H1 (cell line): ENCODE measurements at regions of chr16 and their contacts with region 1.

Region 1: DNA sequence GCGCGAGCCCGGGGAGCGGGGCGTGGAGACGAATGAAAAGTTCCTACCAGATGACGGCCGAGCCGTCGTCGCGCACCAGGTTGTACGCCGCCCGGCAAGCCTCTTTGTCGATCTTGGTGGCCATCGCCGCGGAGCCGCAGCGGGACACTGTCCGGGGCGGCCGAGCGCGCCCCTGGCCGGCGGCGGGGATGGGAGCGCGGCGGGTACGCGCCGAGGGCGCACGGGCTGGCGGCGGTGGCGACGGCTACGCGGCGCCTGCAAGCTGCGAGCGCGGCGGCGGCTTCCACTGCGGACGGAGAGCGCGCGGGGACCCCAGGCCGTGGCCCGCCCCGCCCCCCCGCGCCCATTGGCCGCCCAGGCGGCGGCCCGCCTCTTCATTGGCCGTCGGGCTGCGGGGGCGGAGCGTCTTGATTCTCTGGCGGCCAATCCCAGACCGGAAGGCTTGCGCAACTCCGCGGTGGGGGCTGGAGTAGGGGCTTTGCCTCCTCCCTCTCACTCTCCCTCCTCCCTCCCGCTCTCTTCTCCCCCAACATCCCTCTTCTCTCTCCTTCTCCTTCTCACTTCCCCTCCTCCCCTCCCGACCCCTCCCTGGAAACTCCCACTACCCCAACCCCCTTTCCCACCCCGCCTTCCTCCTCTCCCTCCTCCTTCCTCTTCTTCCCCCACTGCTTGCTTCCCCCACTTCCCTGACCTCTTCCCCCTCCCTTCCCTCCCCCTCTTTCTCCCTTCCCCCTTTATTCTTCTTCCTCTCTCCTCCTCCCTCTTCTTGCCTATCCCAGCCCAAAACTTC is at the start of gene COTL1:
- DNase-seq: peak; percentile 79 to 90
- H3K4me3 ChIP-seq: peak within 1 kb of the TSS; percentile 73 to 88 (median 78)
- H3K27ac ChIP-seq: peak within 1 kb of the TSS; percentile 56; the same call in 1 of the 2 replicates
- H3K4me1 ChIP-seq: peaks cover 6 to 21% (median 13%) of the 10 kb centered on the region in 4 experiments
- H3K27me3 ChIP-seq: peaks cover 0 to 5% (median 3%) of the 10 kb centered on the region in 4 experiments; a peak in 2 of 7 replicates
- CTCF ChIP-seq: no peak
- EP300 ChIP-seq: no peak
- POLR2A ChIP-seq: no peak; a peak in 1 of 3 replicates
- RAD21 ChIP-seq: no peak
- total RNA-seq, gene COTL1: 183 TPM in 2 replicates

Region 2: DNA sequence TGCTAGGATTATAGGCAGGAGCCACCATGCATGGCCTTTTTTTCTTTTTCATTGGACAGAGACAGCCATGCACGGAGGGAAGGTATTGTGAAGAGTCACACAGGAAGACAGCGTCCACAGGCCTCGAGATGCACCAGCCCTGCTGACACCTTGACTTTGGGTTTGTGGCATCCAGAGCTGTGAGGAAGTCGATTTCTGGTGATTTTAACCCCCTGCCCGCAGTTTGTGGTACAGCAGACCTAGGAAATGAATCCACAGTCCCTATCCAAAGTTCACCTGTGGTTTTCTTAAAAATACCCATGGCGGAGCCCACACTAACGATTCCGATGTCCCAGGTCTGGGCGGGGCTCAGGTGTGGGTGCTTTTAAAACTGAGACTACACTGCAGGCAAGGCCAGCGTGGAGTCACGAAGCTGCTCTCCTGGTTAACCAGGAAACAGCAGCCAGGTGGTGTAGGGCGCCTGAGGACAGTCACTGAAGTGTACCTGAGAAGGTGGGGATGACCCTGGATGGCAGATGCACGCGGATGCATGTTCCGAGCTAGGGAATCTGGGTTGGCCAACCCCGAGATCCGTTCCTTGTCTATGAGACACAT is 99.1 kb before region 1 on chr16:
- CTCF ChIA-PET with region 1: interaction called, 49 read pairs
- POLR2A ChIA-PET with region 1: interaction called, 8 read pairs
- DNase-seq: no peak
- H3K4me3 ChIP-seq: no peak overlapping the region
- H3K27ac ChIP-seq: no peak overlapping the region
- H3K4me1 ChIP-seq: peaks cover 0 to 9% (median 3%) of the 10 kb centered on the region in 4 experiments; a peak in 5 of 7 replicates
- H3K27me3 ChIP-seq: no peaks in the 10 kb centered on the region; a peak in 1 of 7 replicates
- CTCF ChIP-seq: no peak
- EP300 ChIP-seq: no peak
- POLR2A ChIP-seq: no peak
- RAD21 ChIP-seq: no peak; a peak in 1 of 4 replicates

Region 3: GRCh38 chr16:84635699-84636098 is 17.7 kb after region 1 on chr16:
- CTCF ChIA-PET with region 1: interaction called, 20 read pairs
- POLR2A ChIA-PET with region 1: no interaction called
- DNase-seq: no peak
- H3K4me3 ChIP-seq: no peak overlapping the region
- H3K27ac ChIP-seq: no peak overlapping the region
- H3K4me1 ChIP-seq: 0 out of 7 replicates have a peak, but pooled peaks cover 0 to 2% (median 0%) of the 10 kb centered on the region in 4 experiments
- H3K27me3 ChIP-seq: no peaks in the 10 kb centered on the region
- CTCF ChIP-seq: no peak
- EP300 ChIP-seq: no peak
- POLR2A ChIP-seq: no peak
- RAD21 ChIP-seq: no peak

Region 4: GRCh38 chr16:84672276-84673202 is 54.6 kb after region 1 on chr16:
- CTCF ChIA-PET with region 1: interaction called, 12 read pairs
- POLR2A ChIA-PET with region 1: no interaction called
- DNase-seq: peak; percentile 57 to 96
- H3K4me3 ChIP-seq: no peak overlapping the region
- H3K27ac ChIP-seq: no peak overlapping the region
- H3K4me1 ChIP-seq: peaks cover 0 to 13% (median 6%) of the 10 kb centered on the region in 4 experiments; a peak in 5 of 7 replicates
- H3K27me3 ChIP-seq: no peaks in the 10 kb centered on the region
- CTCF ChIP-seq: peak; percentile 92 to 95 (median 95)
- EP300 ChIP-seq: no peak
- POLR2A ChIP-seq: no peak
- RAD21 ChIP-seq: peak; percentile 65 to 76

Region 5: DNA sequence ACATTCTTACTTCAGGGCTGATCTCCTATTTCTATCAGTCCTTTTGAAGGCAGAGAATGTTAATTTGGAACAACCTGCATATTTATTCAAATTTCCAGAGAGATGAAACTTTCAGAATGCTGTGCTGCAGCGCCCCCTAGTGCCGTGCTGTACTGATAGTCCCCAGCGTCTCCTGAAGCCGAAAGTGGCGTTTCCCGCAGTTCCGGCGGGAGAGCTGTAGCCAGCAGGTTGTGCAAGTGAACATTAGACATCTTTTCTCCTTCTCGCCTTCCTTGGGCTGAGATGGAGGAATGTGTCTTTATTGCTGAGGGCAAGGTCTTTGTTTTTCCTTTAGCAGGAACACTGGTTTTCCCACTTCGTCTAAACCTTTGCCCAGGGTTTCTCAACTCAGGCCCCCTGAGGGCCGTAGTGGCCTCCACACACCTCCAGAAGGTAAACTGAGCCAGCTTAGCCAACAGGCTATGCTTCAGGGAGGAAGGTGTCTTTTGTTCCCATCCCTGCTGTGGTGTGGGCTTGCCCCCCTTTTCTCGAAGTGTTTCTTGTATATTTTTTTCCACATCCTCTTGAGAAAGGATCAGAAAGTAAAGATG is 108.2 kb after region 1 on chr16:
- CTCF ChIA-PET with region 1: interaction called, 30 read pairs
- POLR2A ChIA-PET with region 1: interaction called, 3 read pairs
- DNase-seq: peak; percentile 36 to 93
- H3K4me3 ChIP-seq: peak overlapping the region in 1 of 4 experiments; percentile 37; a peak in 1 of 8 replicates
- H3K27ac ChIP-seq: no peak overlapping the region
- H3K4me1 ChIP-seq: peaks cover 5 to 20% (median 15%) of the 10 kb centered on the region in 4 experiments; a peak in 5 of 7 replicates
- H3K27me3 ChIP-seq: no peaks in the 10 kb centered on the region
- CTCF ChIP-seq: peak; percentile 81 to 93 (median 85)
- EP300 ChIP-seq: no peak
- POLR2A ChIP-seq: no peak
- RAD21 ChIP-seq: peak; percentile 88 to 89